ENCODE measurements at regions of chr7 and their contacts with region 1.

Region 1: GRCh38 chr7:79452032-79452494 is 1.4 kb downstream of the MAGI2 start:
- DNase-seq: peak; percentile 95 to 96
- H3K4me3 ChIP-seq: peak overlapping the region; percentile 76 to 95
- H3K27ac ChIP-seq: peak overlapping the region; percentile 97 to 98
- H3K4me1 ChIP-seq: peaks cover 0 to 30% (median 22%) of the 10 kb centered on the region in 4 donors
- H3K27me3 ChIP-seq: no peaks in the 10 kb centered on the region
- CTCF ChIP-seq: no peak

Region 2: GRCh38 chr7:79434098-79434497 is 18.0 kb before region 1 on chr7:
- intact Hi-C with region 1: loop called (anchors 2 kb)
- DNase-seq: no peak
- H3K4me3 ChIP-seq: no peak overlapping the region
- H3K27ac ChIP-seq: no peak overlapping the region
- H3K4me1 ChIP-seq: no peaks in the 10 kb centered on the region
- H3K27me3 ChIP-seq: no peaks in the 10 kb centered on the region
- CTCF ChIP-seq: no peak